A673 (cell line): ENCODE measurements at regions of chr7 and their contacts with region 1.

Region 1: GRCh38 chr7:105652359-105652993 is 71.2 kb upstream of the EFCAB10 start:
- DNase-seq: peak; percentile 86
- H3K4me3 ChIP-seq: no peak overlapping the region
- H3K27ac ChIP-seq: peak overlapping the region; percentile 7
- H3K4me1 ChIP-seq: peaks cover 82% of the 10 kb centered on the region
- H3K27me3 ChIP-seq: no peaks in the 10 kb centered on the region
- CTCF ChIP-seq: peak; percentile 90

Region 2: DNA sequence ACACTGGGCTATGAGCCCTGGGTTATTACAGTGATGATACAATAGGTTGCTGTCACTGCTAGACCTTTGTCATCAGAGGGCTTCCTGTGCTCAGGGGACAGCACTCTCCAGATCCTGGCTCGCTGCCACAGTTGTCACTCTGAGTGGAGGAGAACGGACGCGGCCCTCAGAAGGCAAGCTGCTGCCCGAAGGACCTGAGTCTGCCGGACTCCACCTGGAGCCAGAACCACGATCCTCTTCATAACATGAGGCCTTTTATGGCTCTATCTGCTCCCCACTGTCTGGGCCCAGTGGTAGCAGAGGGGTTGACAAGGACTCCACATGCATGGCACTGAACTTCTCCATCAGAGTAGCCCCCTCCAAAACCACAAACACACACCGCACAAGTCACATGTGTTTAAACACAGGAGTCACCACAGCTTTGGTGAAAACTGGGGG is 23.5 kb after region 1 on chr7:
- CTCF ChIA-PET with region 1: interaction called, 15 read pairs
- POLR2A ChIA-PET with region 1: no interaction called
- intact Hi-C with region 1: no loop called
- DNase-seq: no peak
- H3K4me3 ChIP-seq: no peak overlapping the region
- H3K27ac ChIP-seq: no peak overlapping the region
- H3K4me1 ChIP-seq: peaks cover 66% of the 10 kb centered on the region
- H3K27me3 ChIP-seq: no peaks in the 10 kb centered on the region
- CTCF ChIP-seq: no peak

Region 3: GRCh38 chr7:105691733-105692564 is 39.5 kb after region 1 on chr7:
- CTCF ChIA-PET with region 1: interaction called, 3 read pairs
- POLR2A ChIA-PET with region 1: no interaction called
- intact Hi-C with region 1: loop called (anchors 5 kb)
- DNase-seq: peak; percentile 97
- H3K4me3 ChIP-seq: peak overlapping the region; percentile 48
- H3K27ac ChIP-seq: peak overlapping the region; percentile 98
- H3K4me1 ChIP-seq: peaks cover 45% of the 10 kb centered on the region
- H3K27me3 ChIP-seq: no peaks in the 10 kb centered on the region
- CTCF ChIP-seq: no peak

Region 4: GRCh38 chr7:105876091-105876963 is 223.9 kb after region 1 on chr7 and contains the start of gene ATXN7L1:
- CTCF ChIA-PET with region 1: no interaction called
- POLR2A ChIA-PET with region 1: no interaction called
- intact Hi-C with region 1: loop called (anchors 10 kb)
- DNase-seq: peak; percentile 99
- H3K4me3 ChIP-seq: peak within 1 kb of the TSS; percentile 77
- H3K27ac ChIP-seq: peak within 1 kb of the TSS; percentile 93
- H3K4me1 ChIP-seq: no peaks in the 10 kb centered on the region
- H3K27me3 ChIP-seq: no peaks in the 10 kb centered on the region
- CTCF ChIP-seq: peak; percentile 40; the same call in 1 of the 2 replicates
- total RNA-seq, gene ATXN7L1: 29.9 and 32.8 TPM in 2 replicates

Region 5: DNA sequence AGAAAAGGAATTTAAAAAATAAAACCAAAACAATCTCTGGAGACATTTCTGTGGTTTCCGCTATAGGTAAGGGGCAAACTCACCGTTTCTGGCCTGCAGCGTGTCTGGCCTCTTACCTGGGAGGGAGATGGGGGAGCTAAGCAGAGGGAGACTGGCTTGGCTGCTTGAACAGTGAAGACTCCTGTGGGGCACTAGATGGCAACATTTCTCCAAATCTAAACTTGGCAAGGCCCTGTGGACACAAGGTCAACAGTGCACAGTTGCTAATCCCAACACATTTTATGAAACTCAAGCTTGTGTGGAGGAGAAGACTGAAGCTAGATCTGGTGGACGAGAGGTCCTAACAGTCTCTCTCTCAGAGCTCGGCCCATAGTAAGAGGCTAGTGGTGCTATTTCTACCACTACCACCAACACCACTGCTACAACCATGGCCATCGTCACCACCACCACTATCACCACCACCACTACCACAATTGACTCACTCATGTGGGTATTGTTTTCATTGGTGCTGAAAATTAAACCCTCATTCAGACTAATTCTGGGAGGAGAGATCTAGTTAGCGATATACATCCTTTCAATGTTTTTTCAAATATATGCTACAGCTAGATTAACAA is 282.2 kb after region 1 on chr7:
- CTCF ChIA-PET with region 1: interaction called, 5 read pairs
- POLR2A ChIA-PET with region 1: no interaction called
- intact Hi-C with region 1: loop called (anchors 10 kb)
- DNase-seq: peak; percentile 46
- H3K4me3 ChIP-seq: no peak overlapping the region
- H3K27ac ChIP-seq: no peak overlapping the region
- H3K4me1 ChIP-seq: peaks cover 41% of the 10 kb centered on the region
- H3K27me3 ChIP-seq: no peaks in the 10 kb centered on the region
- CTCF ChIP-seq: peak; percentile 50

Region 6: GRCh38 chr7:106041140-106041717 is 388.8 kb after region 1 on chr7:
- CTCF ChIA-PET with region 1: no interaction called
- POLR2A ChIA-PET with region 1: no interaction called
- intact Hi-C with region 1: loop called (anchors 1 kb)
- DNase-seq: peak; percentile 71
- H3K4me3 ChIP-seq: no peak overlapping the region
- H3K27ac ChIP-seq: no peak overlapping the region
- H3K4me1 ChIP-seq: peaks cover 34% of the 10 kb centered on the region
- H3K27me3 ChIP-seq: no peaks in the 10 kb centered on the region
- CTCF ChIP-seq: peak; percentile 80

Region 7: GRCh38 chr7:106153891-106154449 is 501.5 kb after region 1 on chr7:
- CTCF ChIA-PET with region 1: interaction called, 3 read pairs
- POLR2A ChIA-PET with region 1: no interaction called
- intact Hi-C with region 1: loop called (anchors 5 kb)
- DNase-seq: peak; percentile 90
- H3K4me3 ChIP-seq: no peak overlapping the region
- H3K27ac ChIP-seq: no peak overlapping the region
- H3K4me1 ChIP-seq: no peaks in the 10 kb centered on the region
- H3K27me3 ChIP-seq: no peaks in the 10 kb centered on the region
- CTCF ChIP-seq: peak; percentile 96